ENCODE measurements at regions of chr15 and their contacts with region 1.

Region 1: GRCh38 chr15:45855907-45856579 is 221.2 kb downstream of the SQOR start:
- DNase-seq: peak; percentile 23 to 84
- H3K4me3 ChIP-seq: 0 out of 2 replicates have a peak overlapping the region, but pooled peaks have one; percentile 11
- H3K27ac ChIP-seq: peak overlapping the region; percentile 58
- H3K4me1 ChIP-seq: peaks cover 22% of the 10 kb centered on the region
- H3K27me3 ChIP-seq: no peaks in the 10 kb centered on the region
- CTCF ChIP-seq: no peak

Region 2: GRCh38 chr15:45871121-45871985 is 15.3 kb after region 1 on chr15:
- CTCF ChIA-PET with region 1: no interaction called
- POLR2A ChIA-PET with region 1: no interaction called
- intact Hi-C with region 1: loop called (anchors 2 kb)
- DNase-seq: peak; percentile 37 to 63
- H3K4me3 ChIP-seq: no peak overlapping the region
- H3K27ac ChIP-seq: no peak overlapping the region; the same call in 1 of the 2 replicates
- H3K4me1 ChIP-seq: 0 out of 2 replicates have a peak, but pooled peaks cover 6% of the 10 kb centered on the region
- H3K27me3 ChIP-seq: no peaks in the 10 kb centered on the region
- CTCF ChIP-seq: no peak

Region 3: GRCh38 chr15:45919806-45920205 is 63.8 kb after region 1 on chr15:
- CTCF ChIA-PET with region 1: no interaction called
- POLR2A ChIA-PET with region 1: no interaction called
- intact Hi-C with region 1: loop called (anchors 1 kb)
- DNase-seq: peak; percentile 72 to 92
- H3K4me3 ChIP-seq: no peak overlapping the region
- H3K27ac ChIP-seq: 0 out of 2 replicates have a peak overlapping the region, but pooled peaks have one; percentile 26
- H3K4me1 ChIP-seq: peaks cover 6% of the 10 kb centered on the region
- H3K27me3 ChIP-seq: no peaks in the 10 kb centered on the region
- CTCF ChIP-seq: no peak

Region 4: GRCh38 chr15:45943240-45943639 is 87.2 kb after region 1 on chr15:
- CTCF ChIA-PET with region 1: no interaction called
- POLR2A ChIA-PET with region 1: no interaction called
- intact Hi-C with region 1: no loop called
- DNase-seq: no peak
- H3K4me3 ChIP-seq: no peak overlapping the region
- H3K27ac ChIP-seq: no peak overlapping the region
- H3K4me1 ChIP-seq: no peaks in the 10 kb centered on the region
- H3K27me3 ChIP-seq: no peaks in the 10 kb centered on the region
- CTCF ChIP-seq: no peak

Measured in PC-9 (cell line).